HepG2 (cell line): ENCODE measurements at regions of chr12 and their contacts with region 1.

Region 1: GRCh38 chr12:53481957-53482586 is 17.2 kb downstream of the MAP3K12 start:
- DNase-seq: peak; percentile 49
- ATAC-seq: peak; percentile 43
- H3K4me3 ChIP-seq: no peak overlapping the region
- H3K27ac ChIP-seq: no peak overlapping the region
- H3K4me1 ChIP-seq: no peaks in the 10 kb centered on the region
- H3K27me3 ChIP-seq: no peaks in the 10 kb centered on the region
- CTCF ChIP-seq: no peak; the same call in 1 of the 2 replicates
- EP300 ChIP-seq: no peak
- POLR2A ChIP-seq: peak in 1 of 2 experiments; percentile 47; a peak in 2 of 4 replicates
- RAD21 ChIP-seq: no peak

Region 2: GRCh38 chr12:53492830-53493611 is 10.9 kb after region 1 on chr12:
- CTCF ChIA-PET with region 1: no interaction called
- POLR2A ChIA-PET with region 1: interaction called, 28 read pairs
- in situ Hi-C with region 1: no loop called
- intact Hi-C with region 1: no loop called
- DNase-seq: peak; percentile 81
- ATAC-seq: peak; percentile 78
- H3K4me3 ChIP-seq: peak overlapping the region; percentile 64 to 80 (median 75)
- H3K27ac ChIP-seq: peak overlapping the region; percentile 33
- H3K4me1 ChIP-seq: peaks cover 51% of the 10 kb centered on the region
- H3K27me3 ChIP-seq: no peaks in the 10 kb centered on the region; a peak in 1 of 5 replicates
- CTCF ChIP-seq: peak; percentile 11
- EP300 ChIP-seq: peak in 1 of 2 experiments; percentile 5; a peak in 1 of 4 replicates
- POLR2A ChIP-seq: peak; percentile 42 to 72; a peak in 3 of 4 replicates
- RAD21 ChIP-seq: no peak